Left cardiac atrium (tissue), 4 donors: ENCODE measurements at regions of chr11 and their contacts with region 1.

Region 1: GRCh38 chr11:14907411-14908213 is 15.6 kb upstream of the CYP2R1 start:
- DNase-seq: peak; percentile 85
- ATAC-seq: peak; percentile 64 to 84

Region 2: DNA sequence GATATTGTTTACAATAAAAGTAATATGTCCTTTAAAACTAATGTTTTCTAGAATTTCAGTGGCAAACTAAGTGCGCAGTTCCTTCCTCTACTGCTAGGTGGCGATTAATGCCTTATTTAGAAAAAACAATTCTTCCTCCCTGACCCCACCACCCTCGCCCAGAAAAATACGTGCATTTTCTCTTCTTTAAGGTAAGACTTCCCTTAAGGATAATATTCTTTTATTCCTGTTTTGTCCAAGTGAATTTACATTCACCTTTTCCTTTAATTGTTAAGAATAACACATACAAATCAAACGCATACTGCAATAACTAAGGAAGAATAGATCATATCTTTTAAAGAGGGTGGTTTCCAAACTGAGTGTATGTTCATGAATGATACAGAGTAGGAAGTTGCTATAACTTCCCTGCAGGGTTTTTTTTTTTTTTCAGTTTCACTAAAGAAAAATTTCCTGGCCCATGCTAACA is 370.4 kb before region 1 on chr11:
- intact Hi-C with region 1: loop called (anchors 5 to 10 kb)
- DNase-seq: no peak
- ATAC-seq: no peak

Region 3: GRCh38 chr11:14789879-14790484 is 117.6 kb before region 1 on chr11:
- intact Hi-C with region 1: loop called in 1 of 2 experiments (anchors 10 kb)
- DNase-seq: no peak
- ATAC-seq: no peak

Region 4: GRCh38 chr11:14809466-14809865 is 98.1 kb before region 1 on chr11:
- intact Hi-C with region 1: no loop called
- DNase-seq: no peak
- ATAC-seq: no peak

Region 5: DNA sequence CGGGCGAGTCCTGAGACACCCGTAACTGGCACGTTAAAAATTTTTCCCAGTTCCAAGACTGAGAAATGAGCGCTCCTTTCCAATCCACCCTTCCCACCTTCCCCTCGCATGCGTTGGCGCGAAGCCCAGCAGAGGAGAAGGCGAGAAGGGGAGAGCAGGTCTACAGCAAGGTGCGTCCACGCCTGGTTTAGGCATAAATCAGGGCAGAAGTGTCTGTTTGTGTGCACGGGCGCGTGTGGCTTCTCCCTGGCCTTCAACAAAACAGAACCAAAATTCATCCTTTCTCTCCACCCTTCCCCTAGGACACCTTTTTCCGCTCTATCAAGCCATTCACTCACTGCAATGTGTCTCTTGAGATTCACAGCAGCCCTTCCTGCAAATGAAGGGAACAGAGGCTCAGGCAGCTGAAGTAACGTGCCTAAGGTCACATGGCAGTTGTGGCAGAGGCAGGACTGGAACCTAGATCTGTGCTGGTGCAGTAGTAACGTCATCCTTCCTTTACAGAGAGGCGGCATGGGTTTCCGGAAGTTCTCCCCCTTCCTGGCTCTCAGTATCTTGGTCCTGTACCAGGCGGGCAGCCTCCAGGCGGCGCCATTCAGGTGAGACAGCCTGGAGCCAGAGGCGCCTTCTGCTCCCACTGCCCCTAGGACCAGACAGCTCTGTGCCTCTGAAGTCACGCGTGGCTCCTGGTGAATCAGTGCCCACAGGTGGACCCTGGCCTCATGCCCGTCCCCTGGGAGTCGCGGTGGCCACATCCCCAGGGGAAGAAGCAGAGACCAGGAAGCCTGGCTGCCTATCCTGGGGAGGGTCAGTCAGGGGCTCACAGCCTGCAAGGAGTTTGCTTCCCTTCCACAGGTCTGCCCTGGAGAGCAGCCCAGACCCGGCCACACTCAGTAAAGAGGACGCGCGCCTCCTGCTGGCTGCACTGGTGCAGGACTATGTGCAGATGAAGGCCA is 166.9 kb after region 1 on chr11:
- intact Hi-C with region 1: loop called (anchors 1 to 5 kb)
- DNase-seq: peak; percentile 89
- ATAC-seq: peak; percentile 94 to 95

Region 6: GRCh38 chr11:15208378-15209222 is 301.0 kb after region 1 on chr11:
- intact Hi-C with region 1: loop called in 1 of 2 experiments (anchors 5 kb)
- DNase-seq: peak; percentile 70
- ATAC-seq: peak; percentile 90 to 93